ENCODE measurements at regions of chr9 and their contacts with region 1.

Region 1: GRCh38 chr9:137524161-137524983 is 25.8 kb downstream of the PNPLA7 start:
- DNase-seq: no peak
- H3K27ac ChIP-seq: no peak overlapping the region
- CTCF ChIP-seq: no peak

Region 2: DNA sequence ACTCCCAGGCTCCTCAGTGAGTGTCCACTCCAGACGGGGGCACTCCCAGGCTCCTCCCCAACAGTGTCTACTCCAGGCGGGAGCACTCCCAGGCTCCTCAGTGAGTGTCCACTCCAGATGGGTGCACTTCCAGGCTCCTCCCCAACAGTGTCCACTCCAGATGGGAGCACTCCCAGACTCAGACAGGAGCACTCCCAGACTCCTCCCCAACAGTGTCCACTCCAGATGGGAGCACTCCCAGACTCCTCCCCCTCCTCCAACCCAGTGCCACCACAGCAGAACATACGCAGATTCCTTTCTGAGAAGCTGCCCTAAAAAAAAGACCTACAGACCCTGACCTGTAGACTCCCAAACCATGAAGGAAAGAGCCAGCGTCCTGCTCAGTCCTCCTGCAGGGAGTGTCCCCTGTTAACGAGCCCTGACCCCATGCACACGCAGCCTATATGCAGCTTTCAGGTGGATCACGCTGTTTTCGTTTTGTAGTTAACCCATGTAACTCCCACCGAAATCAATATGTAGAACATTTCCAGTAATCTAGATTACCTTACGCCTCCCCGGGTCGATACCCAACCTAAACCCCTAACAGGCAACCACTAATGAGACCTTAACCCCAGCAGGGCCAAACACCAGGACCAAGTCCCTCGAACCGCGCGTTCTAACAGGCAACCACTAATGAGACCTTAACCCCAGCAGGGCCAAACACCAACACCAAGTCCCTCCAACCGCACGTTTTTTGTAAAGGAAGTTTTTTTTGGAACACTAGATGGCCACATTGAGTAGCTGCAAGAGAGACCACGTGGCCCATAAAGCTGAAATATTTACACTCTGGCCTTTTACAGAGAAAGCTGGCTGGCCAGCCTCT is 10.1 kb after region 1 on chr9:
- CTCF ChIA-PET with region 1: interaction called, 11 read pairs
- POLR2A ChIA-PET with region 1: no interaction called
- DNase-seq: peak; percentile 76
- H3K27ac ChIP-seq: no peak overlapping the region
- CTCF ChIP-seq: peak; percentile 95